Posterior cingulate gyrus (tissue), 11 donors: ENCODE measurements at regions of chr13 and their contacts with region 1.

Region 1: DNA sequence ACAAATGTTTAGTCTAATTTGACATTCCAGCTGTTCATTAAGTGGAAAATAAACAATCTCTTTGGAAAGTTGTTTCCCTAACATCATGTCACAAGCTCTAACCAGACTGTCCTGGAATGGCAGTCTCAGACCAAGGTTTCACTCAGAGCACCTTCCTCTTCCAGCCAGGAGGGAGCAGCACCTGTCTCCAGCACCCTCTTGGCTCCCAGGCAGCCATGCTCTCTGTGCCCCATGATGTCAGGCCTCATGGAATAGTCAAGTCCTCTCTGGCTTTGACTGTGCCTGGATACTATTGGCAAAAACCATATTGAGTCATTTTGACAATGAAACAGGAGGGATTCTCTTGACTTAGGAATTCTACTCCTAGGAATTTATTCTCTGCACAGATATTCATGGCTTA is 171.4 kb downstream of the OXGR1 start:
- DNase-seq: no peak

Region 2: GRCh38 chr13:95317039-95317989 is 1505.6 kb before region 1 on chr13:
- intact Hi-C with region 1: no loop called
- DNase-seq: peak in 1 of 10 donors; percentile 27

Region 3: DNA sequence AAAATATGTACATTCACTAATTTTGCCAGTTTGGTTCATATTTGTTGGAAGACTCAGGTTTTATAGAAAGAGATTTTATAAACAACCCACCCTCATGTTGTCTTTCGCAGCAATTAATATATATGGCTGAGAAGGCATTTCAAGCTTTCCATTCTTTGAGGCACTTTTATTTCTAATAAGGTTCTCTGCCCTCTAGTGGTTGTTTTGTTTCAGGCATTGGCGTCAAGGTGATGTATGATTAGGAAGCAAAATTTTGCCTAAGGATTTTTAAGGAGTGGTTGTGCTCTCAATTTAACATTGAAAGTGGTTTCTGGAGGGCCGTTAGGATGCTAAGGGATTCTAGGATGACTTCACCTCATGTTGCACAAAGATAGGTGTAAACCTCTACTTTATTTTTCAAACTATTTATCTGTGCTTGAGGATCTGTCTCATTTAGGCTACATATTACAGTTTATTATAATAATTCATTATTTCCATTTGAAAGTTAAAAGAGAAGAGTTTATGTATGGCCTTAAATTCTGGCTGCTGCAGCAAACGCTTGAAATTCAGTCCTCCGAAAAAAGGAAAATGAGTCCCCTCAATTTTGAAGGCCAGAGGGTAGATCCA is 135.5 kb after region 1 on chr13:
- intact Hi-C with region 1: loop called (anchors 10 kb)
- DNase-seq: peak in 1 of 10 donors; percentile 11

Region 4: GRCh38 chr13:97539651-97540610 is 717.0 kb after region 1 on chr13:
- intact Hi-C with region 1: no loop called
- DNase-seq: no peak